ENCODE measurements at regions of chr10 and their contacts with region 1.

Region 1: GRCh38 chr10:16777473-16778370 is 39.5 kb downstream of the RSU1 start:
- DNase-seq: peak; percentile 67
- CTCF ChIP-seq: peak; percentile 30

Region 2: GRCh38 chr10:16116404-16117304 is 661.1 kb before region 1 on chr10:
- in situ Hi-C with region 1: loop called (anchors 25 kb)
- DNase-seq: peak; percentile 10
- CTCF ChIP-seq: peak; percentile 65

Region 3: GRCh38 chr10:16915300-16915699 is 137.6 kb after region 1 on chr10:
- in situ Hi-C with region 1: no loop called
- DNase-seq: no peak
- CTCF ChIP-seq: no peak

Measured in GM13976 (cell line).